MCF 10A (cell line): ENCODE measurements at regions of chr1 and their contacts with region 1.

Region 1: GRCh38 chr1:55702064-55702463 is 486.9 kb upstream of the USP24 start:
- DNase-seq: peak; percentile 68
- H3K4me3 Mint-ChIP-seq: no peak overlapping the region
- H3K27ac Mint-ChIP-seq: peak overlapping the region; percentile 43
- H3K4me1 Mint-ChIP-seq: peaks cover 6% of the 10 kb centered on the region
- H3K27me3 Mint-ChIP-seq: no peaks in the 10 kb centered on the region
- CTCF ChIP-seq: peak; percentile 70

Region 2: GRCh38 chr1:55690366-55690765 is 11.7 kb before region 1 on chr1:
- CTCF ChIA-PET with region 1: interaction called, 13 read pairs
- POLR2A ChIA-PET with region 1: interaction called, 3 read pairs
- intact Hi-C with region 1: no loop called
- DNase-seq: no peak
- H3K4me3 Mint-ChIP-seq: no peak overlapping the region
- H3K27ac Mint-ChIP-seq: no peak overlapping the region
- H3K4me1 Mint-ChIP-seq: no peaks in the 10 kb centered on the region
- H3K27me3 Mint-ChIP-seq: no peaks in the 10 kb centered on the region
- CTCF ChIP-seq: no peak

Region 3: GRCh38 chr1:55712148-55712547 is 10.1 kb after region 1 on chr1:
- CTCF ChIA-PET with region 1: interaction called, 19 read pairs
- POLR2A ChIA-PET with region 1: no interaction called
- intact Hi-C with region 1: no loop called
- DNase-seq: no peak
- H3K4me3 Mint-ChIP-seq: no peak overlapping the region
- H3K27ac Mint-ChIP-seq: no peak overlapping the region
- H3K4me1 Mint-ChIP-seq: peaks cover 1% of the 10 kb centered on the region
- H3K27me3 Mint-ChIP-seq: no peaks in the 10 kb centered on the region
- CTCF ChIP-seq: no peak

Region 4: DNA sequence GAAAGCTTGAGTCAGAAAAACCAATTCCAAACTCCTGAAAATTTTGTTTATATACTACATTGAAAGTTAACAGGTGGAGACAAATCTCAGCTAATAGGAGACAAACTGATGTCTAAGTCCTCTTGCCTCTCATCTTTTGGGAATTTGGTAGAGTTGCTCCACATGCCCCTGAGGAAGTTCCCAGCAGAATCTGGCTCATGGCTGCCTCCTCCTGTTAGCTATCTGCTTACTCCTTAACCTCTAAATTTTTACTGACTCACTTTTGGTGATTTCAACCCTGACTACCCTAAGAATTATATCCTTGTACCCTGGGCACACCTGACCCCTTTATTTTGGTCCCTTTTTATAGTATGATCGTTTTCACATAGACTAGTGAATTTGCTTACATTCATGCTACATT is 146.8 kb after region 1 on chr1:
- CTCF ChIA-PET with region 1: interaction called, 19 read pairs
- POLR2A ChIA-PET with region 1: no interaction called
- intact Hi-C with region 1: loop called (anchors 2 kb)
- DNase-seq: peak; percentile 53
- H3K4me3 Mint-ChIP-seq: no peak overlapping the region
- H3K27ac Mint-ChIP-seq: no peak overlapping the region
- H3K4me1 Mint-ChIP-seq: no peaks in the 10 kb centered on the region
- H3K27me3 Mint-ChIP-seq: no peaks in the 10 kb centered on the region
- CTCF ChIP-seq: peak; percentile 35

Region 5: GRCh38 chr1:55854911-55855310 is 152.8 kb after region 1 on chr1:
- CTCF ChIA-PET with region 1: interaction called, 19 read pairs
- POLR2A ChIA-PET with region 1: no interaction called
- intact Hi-C with region 1: no loop called
- DNase-seq: no peak
- H3K4me3 Mint-ChIP-seq: no peak overlapping the region
- H3K27ac Mint-ChIP-seq: no peak overlapping the region
- H3K4me1 Mint-ChIP-seq: no peaks in the 10 kb centered on the region
- H3K27me3 Mint-ChIP-seq: no peaks in the 10 kb centered on the region
- CTCF ChIP-seq: no peak

Region 6: DNA sequence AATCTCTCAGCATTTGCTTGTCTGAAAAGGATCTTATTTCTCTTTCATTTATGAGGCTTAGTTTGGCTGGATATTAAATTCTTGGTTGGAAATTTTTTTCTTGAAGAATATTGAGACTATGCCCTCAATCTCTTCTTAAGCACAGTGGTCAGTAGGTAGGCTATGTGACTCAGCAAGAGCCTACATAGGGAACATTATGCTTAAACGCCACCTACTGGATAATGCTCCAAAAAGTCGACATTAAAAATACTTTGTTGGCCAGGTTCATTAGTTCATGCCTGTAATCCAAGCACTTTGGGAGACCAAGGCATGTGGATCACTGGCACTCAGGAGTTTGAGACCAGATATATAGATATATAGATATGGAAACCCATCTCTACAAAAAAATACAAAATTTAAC is 191.1 kb after region 1 on chr1:
- CTCF ChIA-PET with region 1: interaction called, 4 read pairs
- POLR2A ChIA-PET with region 1: no interaction called
- intact Hi-C with region 1: loop called (anchors 1 kb)
- DNase-seq: peak; percentile 68
- H3K4me3 Mint-ChIP-seq: no peak overlapping the region
- H3K27ac Mint-ChIP-seq: no peak overlapping the region
- H3K4me1 Mint-ChIP-seq: no peaks in the 10 kb centered on the region
- H3K27me3 Mint-ChIP-seq: no peaks in the 10 kb centered on the region
- CTCF ChIP-seq: peak; percentile 41